ENCODE measurements at regions of chr1 and their contacts with region 1.

Region 1: GRCh38 chr1:15848957-15849774 is 1.7 kb downstream of the SPEN start:
- DNase-seq: peak; percentile 69
- ATAC-seq: peak; percentile 44
- H3K4me3 ChIP-seq: peak overlapping the region; percentile 70 to 79
- H3K27ac ChIP-seq: peak overlapping the region; percentile 86
- H3K4me1 ChIP-seq: peaks cover 33 to 48% of the 10 kb centered on the region in 2 experiments
- H3K27me3 ChIP-seq: no peaks in the 10 kb centered on the region
- CTCF ChIP-seq: no peak
- POLR2A ChIP-seq: peak; percentile 31
- RAD21 ChIP-seq: no peak

Region 2: DNA sequence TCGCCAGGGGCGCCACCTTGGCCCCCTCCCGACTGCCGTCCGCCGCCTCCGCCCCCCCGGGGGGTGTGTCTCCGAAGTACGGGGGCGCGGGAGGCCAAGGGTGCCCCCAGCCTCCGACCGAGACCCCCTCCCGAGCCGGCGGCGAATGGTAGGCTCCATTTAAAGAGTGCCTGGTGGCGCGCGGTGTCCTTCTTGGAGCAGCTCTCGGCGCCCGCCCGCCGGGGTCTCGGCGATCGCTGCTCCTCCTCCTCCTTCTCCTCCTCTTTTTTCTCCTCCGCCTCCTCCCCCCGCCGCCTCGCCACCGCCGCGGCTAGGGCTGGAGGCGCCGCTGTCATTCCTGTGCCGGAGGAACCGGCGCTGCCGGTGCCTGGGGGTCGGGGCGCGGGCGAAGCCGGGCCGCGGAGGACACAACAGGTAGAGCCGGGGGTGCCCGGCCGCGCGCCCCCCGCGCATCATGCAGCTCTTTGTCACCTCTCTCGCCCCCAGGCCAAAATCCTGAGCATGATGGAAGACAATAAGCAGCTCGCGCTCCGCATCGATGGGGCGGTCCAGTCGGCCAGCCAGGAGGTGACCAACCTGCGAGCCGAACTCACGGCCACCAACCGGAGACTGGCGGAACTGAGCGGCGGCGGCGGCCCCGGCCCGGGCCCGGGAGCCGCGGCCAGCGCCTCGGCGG is 1250.5 kb before region 1 on chr1 and contains the start of gene KAZN:
- CTCF ChIA-PET with region 1: no interaction called
- POLR2A ChIA-PET with region 1: no interaction called
- RAD21 ChIA-PET with region 1: no interaction called
- intact Hi-C with region 1: no loop called
- DNase-seq: no peak
- ATAC-seq: no peak
- H3K4me3 ChIP-seq: no peak within 1 kb of the TSS
- H3K27ac ChIP-seq: no peak within 1 kb of the TSS
- H3K4me1 ChIP-seq: no peaks in the 10 kb centered on the region
- H3K27me3 ChIP-seq: peaks cover 34% of the 10 kb centered on the region
- CTCF ChIP-seq: no peak
- POLR2A ChIP-seq: no peak
- RAD21 ChIP-seq: no peak
- total RNA-seq, gene KAZN: 13.4 TPM

Region 3: DNA sequence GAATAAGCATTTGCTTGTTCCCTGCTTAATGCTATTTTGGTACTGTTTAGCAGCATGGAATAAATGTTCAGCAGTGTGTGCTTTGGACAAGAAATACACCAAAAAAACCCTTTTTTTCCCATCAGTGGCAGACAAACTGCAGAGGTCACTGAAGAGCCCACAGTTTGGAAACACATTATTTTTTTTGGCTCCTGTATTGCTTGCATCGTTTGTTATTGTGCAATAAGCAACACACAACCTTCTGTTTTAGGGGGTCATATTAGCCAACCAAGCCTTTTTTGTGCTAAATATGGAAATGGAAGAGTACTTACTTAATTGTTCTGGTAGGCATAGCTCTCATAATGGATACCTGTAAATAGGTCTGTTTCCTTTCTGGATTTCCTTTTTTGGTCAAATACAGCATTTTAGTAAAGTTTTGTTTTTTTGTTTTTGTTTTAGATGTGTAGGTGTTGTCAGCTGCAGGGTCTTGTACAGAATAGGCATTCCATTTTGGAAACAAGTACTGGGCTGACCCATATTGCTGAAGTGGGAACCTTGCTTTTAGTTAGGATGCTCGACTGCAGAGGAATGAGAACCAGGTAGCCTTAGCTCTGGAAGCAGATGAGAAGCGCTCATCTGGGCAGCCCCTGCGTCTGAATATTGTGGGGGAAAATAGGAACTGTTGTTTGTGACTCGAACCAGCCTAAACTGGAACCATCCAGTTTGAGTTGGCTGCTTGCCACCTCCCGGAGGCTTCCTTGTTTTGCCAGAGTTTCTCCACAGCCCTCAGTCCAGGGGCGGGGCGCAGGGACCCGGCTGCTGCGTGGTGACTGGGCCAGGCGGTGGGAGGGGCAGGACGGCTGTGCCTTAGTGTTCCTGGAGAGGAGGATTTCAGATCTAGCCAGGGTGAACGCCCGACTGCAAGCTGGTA is 36.8 kb after region 1 on chr1:
- CTCF ChIA-PET with region 1: no interaction called
- POLR2A ChIA-PET with region 1: interaction called, 3 read pairs
- RAD21 ChIA-PET with region 1: no interaction called
- intact Hi-C with region 1: loop called (anchors 5 kb)
- DNase-seq: peak; percentile 41
- ATAC-seq: peak; percentile 98
- H3K4me3 ChIP-seq: peak overlapping the region; percentile 12 to 25; a peak in 2 of 4 replicates
- H3K27ac ChIP-seq: peak overlapping the region; percentile 60
- H3K4me1 ChIP-seq: peaks cover 31 to 35% of the 10 kb centered on the region in 2 experiments
- H3K27me3 ChIP-seq: no peaks in the 10 kb centered on the region
- CTCF ChIP-seq: 0 out of 6 replicates have a peak, but pooled peaks of 1 of the 3 experiments have one; percentile 8
- POLR2A ChIP-seq: no peak
- RAD21 ChIP-seq: no peak

Measured in HCT116 (cell line).